Esophagus squamous epithelium (tissue), 5 donors: ENCODE measurements at regions of chr17 and their contacts with region 1.

Region 1: DNA sequence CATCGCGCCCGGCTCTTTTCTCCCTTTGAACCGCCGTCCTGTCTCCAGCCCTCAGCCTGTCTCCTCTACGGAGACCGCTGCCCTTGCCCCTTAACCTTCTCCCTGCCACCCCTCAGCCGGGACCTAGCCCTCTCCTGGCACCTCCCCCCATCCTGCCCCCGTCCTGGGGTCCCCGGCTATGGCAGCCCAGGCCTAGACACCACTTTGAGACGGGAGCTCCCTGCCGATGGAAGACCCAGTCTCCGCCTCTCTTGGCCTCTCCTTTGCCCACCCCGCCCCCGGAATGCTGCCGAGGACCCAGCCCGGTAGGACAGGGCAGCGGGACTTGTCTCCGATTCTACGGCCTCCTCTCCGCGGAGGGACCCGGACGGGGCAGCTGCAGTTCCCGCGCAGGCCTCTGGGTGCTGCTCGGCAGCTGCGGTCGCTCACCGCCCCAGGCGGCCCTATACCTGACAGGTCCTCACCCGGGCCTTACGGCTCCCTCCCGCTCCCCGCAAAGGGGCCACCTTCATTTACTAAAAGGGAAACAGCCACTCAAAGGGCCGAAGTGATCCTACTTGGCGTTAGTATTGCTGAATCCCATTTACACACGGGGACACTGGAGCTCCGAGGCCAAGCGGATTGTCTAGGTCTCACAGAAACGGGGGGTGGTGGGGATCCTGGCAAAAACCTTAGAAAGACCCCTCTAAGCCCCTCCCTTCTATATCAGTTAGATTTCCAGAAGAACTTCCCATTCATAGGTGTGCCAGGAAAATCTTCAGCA is 32.6 kb upstream of the TAC4 start:
- DNase-seq: no peak
- H3K4me3 ChIP-seq: peak overlapping the region in 2 of 4 donors; percentile 7 to 24
- H3K27ac ChIP-seq: no peak overlapping the region
- H3K4me1 ChIP-seq: peaks cover 0 to 11% (median 3%) of the 10 kb centered on the region in 3 donors
- H3K27me3 ChIP-seq: peaks cover 0 to 83% (median 4%) of the 10 kb centered on the region in 4 donors
- CTCF ChIP-seq: peak; percentile 91 to 99 (median 98)
- POLR2A ChIP-seq: no peak

Region 2: DNA sequence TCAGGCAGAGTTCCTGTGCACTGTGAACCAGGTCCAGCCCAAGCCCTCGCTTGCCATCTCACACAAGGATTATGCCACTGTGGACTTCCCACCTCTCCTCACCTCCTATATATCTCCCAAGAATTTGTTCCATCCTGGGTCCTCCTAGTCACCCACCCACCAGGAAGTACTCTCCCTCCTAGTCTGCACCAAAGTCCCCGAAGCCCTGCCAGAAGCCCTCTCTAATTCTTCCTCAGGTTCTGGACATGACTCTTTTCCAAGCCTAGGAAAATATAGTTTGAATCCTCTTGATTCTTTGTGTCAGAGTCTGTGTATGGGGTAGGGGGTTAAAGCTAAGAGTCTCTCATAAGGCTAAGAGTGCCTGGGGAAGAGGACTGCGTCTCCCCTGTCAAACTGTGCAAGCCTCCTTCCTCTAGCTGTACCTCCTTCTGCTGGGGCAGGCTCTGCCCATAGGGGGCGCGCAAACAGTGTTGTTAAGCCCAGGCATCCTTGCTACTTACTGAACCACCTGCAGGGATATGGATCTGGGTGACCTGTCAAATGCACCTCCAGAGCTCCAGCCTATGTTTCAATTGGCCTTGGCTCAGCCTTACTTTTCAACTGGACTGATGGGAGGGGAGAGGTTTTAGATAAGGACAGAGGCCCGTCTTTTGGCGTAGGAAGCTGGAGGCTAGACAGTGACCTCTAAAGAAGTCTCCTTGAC is 71.9 kb after region 1 on chr17:
- intact Hi-C with region 1: loop called (anchors 10 kb)
- DNase-seq: no peak
- H3K4me3 ChIP-seq: no peak overlapping the region
- H3K27ac ChIP-seq: no peak overlapping the region
- H3K4me1 ChIP-seq: no peaks in the 10 kb centered on the region
- H3K27me3 ChIP-seq: peaks cover 0 to 78% (median 0%) of the 10 kb centered on the region in 4 donors
- CTCF ChIP-seq: peak; percentile 51 to 90 (median 78)
- POLR2A ChIP-seq: no peak